ENCODE measurements at regions of chr1 and their contacts with region 1.

Region 1: DNA sequence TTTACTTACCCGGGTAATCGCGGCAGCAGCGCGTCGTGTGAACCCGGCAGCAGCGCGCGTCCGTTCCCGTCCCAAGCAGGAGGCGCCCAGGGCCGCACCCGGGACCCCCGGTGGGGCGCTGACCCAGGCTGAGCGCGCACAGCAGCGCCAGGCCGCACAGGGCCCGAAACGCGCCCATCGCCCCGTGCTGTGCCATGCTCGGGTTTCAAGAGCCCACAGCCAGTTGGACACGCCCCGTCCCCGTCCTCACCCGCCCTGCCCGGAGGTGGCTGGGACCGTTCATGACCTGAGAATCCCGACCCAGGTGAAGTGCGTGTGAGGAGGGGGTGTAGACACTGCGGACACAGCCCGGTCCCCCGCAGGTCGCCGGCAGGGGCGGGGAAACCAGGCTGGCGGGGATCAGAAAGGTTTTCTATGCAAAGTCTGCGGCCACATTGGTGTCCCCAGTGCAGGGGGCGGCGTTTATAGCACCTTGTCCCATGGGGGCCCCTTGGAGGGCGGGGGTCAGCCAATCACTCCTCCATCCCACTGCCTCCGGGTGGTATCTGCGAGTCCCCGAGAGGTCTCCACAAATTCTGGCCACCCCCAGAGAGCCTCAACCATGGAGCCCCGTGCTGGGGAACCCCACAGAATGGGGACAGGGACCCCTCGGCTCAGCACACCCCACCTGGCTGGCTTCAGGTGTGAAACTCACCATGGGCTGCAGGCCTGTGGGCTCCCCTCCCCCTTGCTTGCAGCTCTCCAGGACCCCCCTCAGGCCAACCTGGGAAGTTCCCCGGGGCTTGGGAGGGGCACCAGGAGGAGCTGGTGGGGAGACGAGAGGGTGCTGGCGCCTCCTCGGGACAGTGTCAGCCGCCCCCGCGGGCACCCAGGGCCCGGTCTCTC is at the start of gene TNFRSF18:
- DNase-seq: peak; percentile 72
- ATAC-seq: peak; percentile 46
- H3K4me3 ChIP-seq: peak within 1 kb of the TSS in 4 of 5 experiments; percentile 34 to 61 (median 50)
- H3K4me3 Mint-ChIP-seq: peak within 1 kb of the TSS; percentile 88
- H3K27ac ChIP-seq: no peak within 1 kb of the TSS
- H3K27ac Mint-ChIP-seq: peak within 1 kb of the TSS; percentile 63
- H3K4me1 ChIP-seq: peaks cover 44 to 52% of the 10 kb centered on the region in 2 donors
- H3K4me1 Mint-ChIP-seq: peaks cover 27% of the 10 kb centered on the region
- H3K27me3 ChIP-seq: peaks cover 0 to 41% (median 12%) of the 10 kb centered on the region in 4 experiments
- H3K27me3 Mint-ChIP-seq: peaks cover 9% of the 10 kb centered on the region
- CTCF ChIP-seq: no peak
- total RNA-seq, gene TNFRSF18: 33.5 and 38.1 TPM in 2 replicates

Region 2: DNA sequence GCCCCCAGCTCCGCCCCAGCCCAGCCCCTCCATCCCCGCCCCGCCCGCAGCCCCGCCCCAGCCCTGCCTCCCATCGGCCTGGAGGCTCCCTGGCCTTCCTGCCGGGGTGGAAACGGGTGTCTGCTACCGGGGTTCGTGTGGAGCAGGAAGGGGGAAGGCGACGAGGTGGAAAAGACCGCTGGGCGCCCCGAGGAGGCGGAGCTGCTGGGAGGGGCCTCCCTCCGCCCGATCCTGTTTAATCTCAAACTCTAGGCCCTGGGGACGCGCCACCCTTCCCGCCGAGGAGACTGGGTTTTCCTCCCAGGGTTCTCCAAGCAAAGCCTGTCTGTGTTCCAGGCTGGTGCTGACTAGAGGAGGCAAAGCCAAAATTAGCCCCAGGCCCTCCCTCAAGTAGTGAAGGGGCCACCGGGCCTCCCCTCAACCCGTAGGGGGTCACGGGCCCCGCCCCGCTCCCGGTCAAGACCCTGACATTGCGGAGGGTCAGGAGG is 49.1 kb before region 1 on chr1:
- CTCF ChIA-PET with region 1: no interaction called
- POLR2A ChIA-PET with region 1: no interaction called
- intact Hi-C with region 1: loop called (anchors 5 kb)
- DNase-seq: peak; percentile 74
- ATAC-seq: peak; percentile 64
- H3K4me3 ChIP-seq: peak overlapping the region; percentile 52 to 93 (median 87)
- H3K4me3 Mint-ChIP-seq: peak overlapping the region; percentile 86
- H3K27ac ChIP-seq: peak overlapping the region; percentile 94 to 97
- H3K27ac Mint-ChIP-seq: peak overlapping the region; percentile 89
- H3K4me1 ChIP-seq: peaks cover 8 to 23% of the 10 kb centered on the region in 2 donors
- H3K4me1 Mint-ChIP-seq: peaks cover 5% of the 10 kb centered on the region
- H3K27me3 ChIP-seq: no peaks in the 10 kb centered on the region
- H3K27me3 Mint-ChIP-seq: no peaks in the 10 kb centered on the region
- CTCF ChIP-seq: no peak

Region 3: DNA sequence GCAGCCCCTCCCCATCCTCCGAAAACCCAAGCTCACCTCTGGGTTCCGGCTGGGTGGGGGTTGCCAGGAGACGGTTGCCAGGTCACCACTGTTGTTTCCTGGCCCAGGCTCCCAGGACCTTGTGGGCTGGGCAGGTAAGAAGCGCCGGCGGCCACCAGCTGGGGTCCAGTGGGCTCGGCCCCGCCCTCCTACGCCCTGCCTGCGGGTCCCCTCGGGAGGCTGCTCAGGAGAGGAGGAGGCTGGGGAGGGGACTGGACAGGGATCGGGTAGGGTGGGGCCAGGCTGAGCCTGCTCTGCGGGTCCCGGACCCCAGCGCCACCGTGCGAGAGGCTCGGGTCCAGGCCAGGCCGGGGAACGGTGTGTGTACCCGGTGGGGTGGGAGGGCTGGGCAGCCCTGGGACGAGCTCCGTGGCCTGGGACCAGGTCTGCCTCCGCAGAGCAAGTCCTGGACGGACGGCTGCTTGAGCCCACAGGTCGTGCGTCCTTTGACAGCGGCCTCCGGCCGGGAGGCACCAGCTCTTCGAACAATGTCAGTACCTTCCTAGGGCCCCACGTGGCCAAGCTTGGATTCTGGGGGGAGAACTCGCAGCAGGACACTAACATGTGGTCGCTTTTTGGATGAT is 32.7 kb before region 1 on chr1 and contains the start of gene TTLL10:
- CTCF ChIA-PET with region 1: interaction called, 3 read pairs
- POLR2A ChIA-PET with region 1: interaction called, 3 read pairs
- intact Hi-C with region 1: loop called (anchors 2 kb)
- DNase-seq: peak; percentile 84
- ATAC-seq: peak; percentile 31
- H3K4me3 ChIP-seq: peak within 1 kb of the TSS in 2 of 5 experiments; percentile 15 to 22
- H3K4me3 Mint-ChIP-seq: peak within 1 kb of the TSS; percentile 55
- H3K27ac ChIP-seq: no peak within 1 kb of the TSS
- H3K27ac Mint-ChIP-seq: peak within 1 kb of the TSS; percentile 50
- H3K4me1 ChIP-seq: peaks cover 57 to 70% of the 10 kb centered on the region in 2 donors
- H3K4me1 Mint-ChIP-seq: peaks cover 52% of the 10 kb centered on the region
- H3K27me3 ChIP-seq: peaks cover 0 to 44% (median 21%) of the 10 kb centered on the region in 4 experiments
- H3K27me3 Mint-ChIP-seq: peaks cover 12% of the 10 kb centered on the region
- CTCF ChIP-seq: no peak
- total RNA-seq, gene TTLL10: 0.37 and 0.61 TPM in 2 replicates

Region 4: GRCh38 chr1:1231400-1232223 is 25.0 kb after region 1 on chr1 and contains the start of gene SDF4:
- CTCF ChIA-PET with region 1: no interaction called
- POLR2A ChIA-PET with region 1: no interaction called
- intact Hi-C with region 1: loop called (anchors 2 kb)
- DNase-seq: peak; percentile 98
- ATAC-seq: peak; percentile 94
- H3K4me3 ChIP-seq: peak within 1 kb of the TSS; percentile 86 to 98 (median 90)
- H3K4me3 Mint-ChIP-seq: peak within 1 kb of the TSS; percentile 93
- H3K27ac ChIP-seq: peak within 1 kb of the TSS; percentile 29 to 91
- H3K27ac Mint-ChIP-seq: peak within 1 kb of the TSS; percentile 84
- H3K4me1 ChIP-seq: peaks cover 25 to 30% of the 10 kb centered on the region in 2 donors
- H3K4me1 Mint-ChIP-seq: peaks cover 33% of the 10 kb centered on the region
- H3K27me3 ChIP-seq: no peaks in the 10 kb centered on the region
- H3K27me3 Mint-ChIP-seq: no peaks in the 10 kb centered on the region
- CTCF ChIP-seq: no peak
- total RNA-seq, gene SDF4: 143 and 151 TPM in 2 replicates

Measured in B cell (primary cell).